ENCODE measurements at regions of chr11 and their contacts with region 1.

Region 1: GRCh38 chr11:1559119-1559951 is 12.7 kb downstream of the DUSP8 start:
- DNase-seq: peak; percentile 91 to 97 (median 95)
- H3K4me3 ChIP-seq: peak overlapping the region in 28 of 59 donors; percentile 2 to 42 (median 20)
- H3K27ac ChIP-seq: peak overlapping the region; percentile 76 to 96 (median 90)
- H3K27me3 ChIP-seq: no peaks in the 10 kb centered on the region
- CTCF ChIP-seq: peak in 22 of 56 donors; percentile 7 to 46 (median 22)

Region 2: GRCh38 chr11:1574238-1574932 is 15.1 kb after region 1 on chr11:
- intact Hi-C with region 1: loop called in 1 of 2 experiments (anchors 2 kb)
- DNase-seq: peak in 6 of 10 donors; percentile 47 to 84 (median 59)
- H3K4me3 ChIP-seq: peak overlapping the region; percentile 48 to 82 (median 68)
- H3K27ac ChIP-seq: peak overlapping the region; percentile 23 to 97 (median 90)
- H3K27me3 ChIP-seq: no peaks in the 10 kb centered on the region
- CTCF ChIP-seq: peak; percentile 57 to 99 (median 84)

Region 3: GRCh38 chr11:1619449-1619848 is 60.1 kb after region 1 on chr11:
- intact Hi-C with region 1: no loop called
- DNase-seq: no peak
- H3K4me3 ChIP-seq: no peak overlapping the region
- H3K27ac ChIP-seq: no peak overlapping the region
- H3K27me3 ChIP-seq: peaks cover 0 to 35% (median 0%) of the 10 kb centered on the region in 45 donors
- CTCF ChIP-seq: no peak

Region 4: DNA sequence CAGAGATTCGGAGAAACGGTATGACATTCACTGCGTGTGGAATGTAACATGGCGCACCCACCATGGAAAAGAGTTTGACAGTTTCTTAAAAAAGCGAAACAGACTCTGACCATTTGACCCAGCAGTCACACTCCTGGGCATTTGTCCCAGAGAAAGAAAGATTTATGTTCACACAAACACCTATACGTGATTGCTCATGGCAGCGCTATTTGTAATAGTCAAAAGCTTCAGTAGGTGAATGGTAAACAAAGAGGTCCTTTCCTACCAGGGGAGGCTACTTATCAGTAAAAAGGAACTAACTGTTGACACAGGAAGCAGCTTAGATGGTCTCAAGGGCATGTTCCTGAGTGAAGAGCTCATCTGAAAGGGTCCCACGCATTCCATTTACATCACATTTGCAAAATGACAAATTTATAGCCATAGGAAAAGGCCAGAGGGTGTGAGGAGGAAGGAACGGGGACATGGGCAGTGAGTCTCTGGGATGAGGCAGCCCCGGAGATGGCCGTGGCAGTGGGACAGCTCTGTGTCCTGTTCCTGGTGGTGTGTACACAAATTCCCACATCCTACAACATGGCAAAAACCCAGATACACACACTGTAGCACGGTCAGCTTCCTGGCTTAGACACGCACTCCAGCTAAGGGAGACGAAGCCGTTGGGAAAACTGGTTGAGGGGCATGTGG is 123.0 kb after region 1 on chr11:
- intact Hi-C with region 1: no loop called
- DNase-seq: no peak
- H3K4me3 ChIP-seq: no peak overlapping the region
- H3K27ac ChIP-seq: no peak overlapping the region
- H3K27me3 ChIP-seq: peaks cover 0 to 27% (median 4%) of the 10 kb centered on the region in 45 donors
- CTCF ChIP-seq: no peak

Measured in dorsolateral prefrontal cortex (tissue), 120 donors.